ENCODE measurements at regions of chr14 and their contacts with region 1.

Region 1: GRCh38 chr14:74008843-74009499 is 10.1 kb downstream of the ENTPD5 start:
- DNase-seq: no peak
- ATAC-seq: no peak
- H3K4me3 ChIP-seq: no peak overlapping the region
- H3K27ac ChIP-seq: no peak overlapping the region
- H3K4me1 ChIP-seq: no peaks in the 10 kb centered on the region
- H3K27me3 ChIP-seq: no peaks in the 10 kb centered on the region
- CTCF ChIP-seq: no peak
- POLR2A ChIP-seq: no peak

Region 2: GRCh38 chr14:74042296-74042695 is 33.3 kb after region 1 on chr14:
- intact Hi-C with region 1: loop called in 1 of 10 experiments (anchors 2 kb)
- DNase-seq: no peak
- ATAC-seq: no peak
- H3K4me3 ChIP-seq: no peak overlapping the region
- H3K27ac ChIP-seq: no peak overlapping the region
- H3K4me1 ChIP-seq: no peaks in the 10 kb centered on the region
- H3K27me3 ChIP-seq: no peaks in the 10 kb centered on the region
- CTCF ChIP-seq: no peak
- POLR2A ChIP-seq: no peak

Region 3: GRCh38 chr14:74542056-74542685 is 533.2 kb after region 1 on chr14:
- intact Hi-C with region 1: no loop called
- DNase-seq: peak in 2 of 5 donors; percentile 6 to 39
- ATAC-seq: peak in 2 of 4 donors; percentile 7 to 25
- H3K4me3 ChIP-seq: no peak overlapping the region
- H3K27ac ChIP-seq: no peak overlapping the region
- H3K4me1 ChIP-seq: no peaks in the 10 kb centered on the region
- H3K27me3 ChIP-seq: no peaks in the 10 kb centered on the region
- CTCF ChIP-seq: no peak
- POLR2A ChIP-seq: no peak

Measured in heart left ventricle (tissue), 16 donors.